ENCODE measurements at regions of chr3 and their contacts with region 1.

Region 1: GRCh38 chr3:4584456-4585249 is 91.5 kb downstream of the ITPR1 start:
- DNase-seq: peak; percentile 13
- ATAC-seq: peak; percentile 56
- H3K4me3 ChIP-seq: peak overlapping the region; percentile 82
- H3K27ac ChIP-seq: peak overlapping the region; percentile 30
- H3K4me1 ChIP-seq: peaks cover 13% of the 10 kb centered on the region
- H3K27me3 ChIP-seq: no peaks in the 10 kb centered on the region
- CTCF ChIP-seq: peak in 1 of 3 experiments; percentile 55; a peak in 2 of 6 replicates
- EP300 ChIP-seq: 0 out of 4 replicates have a peak, but pooled peaks of 1 of the 2 experiments have one; percentile 24
- POLR2A ChIP-seq: no peak
- RAD21 ChIP-seq: peak; percentile 54; the same call in 1 of the 2 replicates

Region 2: GRCh38 chr3:4322635-4323034 is 262.0 kb before region 1 on chr3:
- CTCF ChIA-PET with region 1: no interaction called
- POLR2A ChIA-PET with region 1: interaction called, 10 read pairs
- RAD21 ChIA-PET with region 1: no interaction called
- SMC1A ChIA-PET with region 1: no interaction called
- in situ Hi-C with region 1: no loop called
- intact Hi-C with region 1: no loop called
- DNase-seq: no peak
- ATAC-seq: no peak
- H3K4me3 ChIP-seq: no peak overlapping the region
- H3K27ac ChIP-seq: no peak overlapping the region
- H3K4me1 ChIP-seq: no peaks in the 10 kb centered on the region
- H3K27me3 ChIP-seq: no peaks in the 10 kb centered on the region
- CTCF ChIP-seq: no peak
- EP300 ChIP-seq: no peak
- POLR2A ChIP-seq: no peak
- RAD21 ChIP-seq: no peak

Region 3: DNA sequence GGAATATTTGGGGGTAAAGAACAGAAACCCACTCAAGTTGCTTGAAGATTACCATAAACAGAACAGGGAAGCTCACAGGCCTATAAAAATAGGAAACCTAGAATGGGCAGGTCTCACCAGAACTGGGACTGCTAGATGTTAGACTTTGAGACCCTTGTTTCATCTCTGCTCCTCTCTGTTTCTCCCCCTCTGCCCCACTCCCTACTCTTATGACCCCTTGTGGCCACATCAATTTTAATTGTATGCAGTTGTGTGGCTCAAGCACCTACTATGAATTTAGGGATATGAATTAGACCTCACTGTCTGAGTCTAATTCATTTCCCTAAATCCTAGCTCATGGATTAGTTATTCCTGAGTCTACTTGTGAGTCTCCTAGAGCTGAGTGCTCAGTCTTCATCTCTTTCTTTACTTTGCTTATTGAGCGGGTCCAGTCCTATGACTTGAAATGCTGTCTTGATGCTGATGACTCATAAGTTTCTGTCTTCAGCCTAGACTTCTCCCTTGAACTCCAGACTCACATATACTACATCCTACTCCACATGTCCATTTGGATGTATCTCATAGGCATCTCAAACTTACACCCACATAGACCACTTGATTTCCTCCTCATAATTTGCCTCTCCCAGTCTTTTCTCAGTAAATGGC is 12.8 kb before region 1 on chr3:
- CTCF ChIA-PET with region 1: interaction called, 7 read pairs
- POLR2A ChIA-PET with region 1: interaction called, 7 read pairs
- RAD21 ChIA-PET with region 1: no interaction called
- SMC1A ChIA-PET with region 1: interaction called, 13 read pairs
- in situ Hi-C with region 1: no loop called
- intact Hi-C with region 1: no loop called
- DNase-seq: no peak
- ATAC-seq: peak; percentile 77
- H3K4me3 ChIP-seq: no peak overlapping the region
- H3K27ac ChIP-seq: no peak overlapping the region
- H3K4me1 ChIP-seq: no peaks in the 10 kb centered on the region; the same call in 1 of the 2 replicates
- H3K27me3 ChIP-seq: no peaks in the 10 kb centered on the region
- CTCF ChIP-seq: peak; percentile 17 to 33 (median 30); a peak in 3 of 6 replicates
- EP300 ChIP-seq: no peak
- POLR2A ChIP-seq: no peak
- RAD21 ChIP-seq: peak; percentile 55; the same call in 1 of the 2 replicates